ENCODE measurements at regions of chr1 and their contacts with region 1.

Region 1: DNA sequence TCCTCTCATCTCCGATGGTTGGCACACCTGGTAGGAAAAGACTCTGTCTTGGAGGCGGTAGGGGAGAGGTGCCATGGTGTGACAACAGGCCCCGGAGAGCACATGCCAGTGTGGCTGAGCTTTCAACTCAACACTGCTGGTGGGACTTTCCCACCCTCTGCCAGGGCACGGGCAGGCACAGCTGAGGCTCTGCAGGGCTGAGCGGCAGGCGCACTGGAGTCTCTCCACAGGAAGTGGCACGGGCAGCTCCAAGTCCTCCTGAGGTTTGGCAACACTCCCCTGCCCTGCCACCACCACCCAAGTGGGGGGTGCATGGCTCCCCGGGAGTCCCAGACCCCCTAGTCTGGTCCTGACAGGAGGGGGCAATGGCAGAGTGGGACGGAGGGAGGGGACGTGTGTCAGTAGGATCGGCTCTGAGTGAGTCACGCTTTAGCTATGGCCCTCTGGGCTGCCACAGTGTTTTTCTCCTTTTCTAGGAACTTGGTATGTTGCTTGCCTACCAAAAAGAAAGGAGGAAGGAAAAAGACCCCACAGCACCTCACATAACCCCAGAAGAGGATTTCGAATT is 27.3 kb upstream of the EVA1B start:
- DNase-seq: no peak
- H3K4me3 ChIP-seq: no peak overlapping the region
- H3K27me3 ChIP-seq: no peaks in the 10 kb centered on the region
- CTCF ChIP-seq: no peak

Region 2: GRCh38 chr1:36083993-36084738 is 266.6 kb before region 1 on chr1 and contains the start of gene TEKT2:
- CTCF ChIA-PET with region 1: no interaction called
- POLR2A ChIA-PET with region 1: no interaction called
- DNase-seq: no peak
- H3K4me3 ChIP-seq: peak within 1 kb of the TSS; percentile 44
- H3K27me3 ChIP-seq: no peaks in the 10 kb centered on the region
- CTCF ChIP-seq: no peak
- polyA plus RNA-seq, gene TEKT2: 0.10 and 0.16 TPM in 2 replicates

Region 3: GRCh38 chr1:36369061-36369861 is 18.5 kb after region 1 on chr1:
- CTCF ChIA-PET with region 1: interaction called, 88 read pairs
- POLR2A ChIA-PET with region 1: no interaction called
- DNase-seq: no peak
- H3K4me3 ChIP-seq: no peak overlapping the region
- H3K27me3 ChIP-seq: no peaks in the 10 kb centered on the region
- CTCF ChIP-seq: peak; percentile 94

Region 4: DNA sequence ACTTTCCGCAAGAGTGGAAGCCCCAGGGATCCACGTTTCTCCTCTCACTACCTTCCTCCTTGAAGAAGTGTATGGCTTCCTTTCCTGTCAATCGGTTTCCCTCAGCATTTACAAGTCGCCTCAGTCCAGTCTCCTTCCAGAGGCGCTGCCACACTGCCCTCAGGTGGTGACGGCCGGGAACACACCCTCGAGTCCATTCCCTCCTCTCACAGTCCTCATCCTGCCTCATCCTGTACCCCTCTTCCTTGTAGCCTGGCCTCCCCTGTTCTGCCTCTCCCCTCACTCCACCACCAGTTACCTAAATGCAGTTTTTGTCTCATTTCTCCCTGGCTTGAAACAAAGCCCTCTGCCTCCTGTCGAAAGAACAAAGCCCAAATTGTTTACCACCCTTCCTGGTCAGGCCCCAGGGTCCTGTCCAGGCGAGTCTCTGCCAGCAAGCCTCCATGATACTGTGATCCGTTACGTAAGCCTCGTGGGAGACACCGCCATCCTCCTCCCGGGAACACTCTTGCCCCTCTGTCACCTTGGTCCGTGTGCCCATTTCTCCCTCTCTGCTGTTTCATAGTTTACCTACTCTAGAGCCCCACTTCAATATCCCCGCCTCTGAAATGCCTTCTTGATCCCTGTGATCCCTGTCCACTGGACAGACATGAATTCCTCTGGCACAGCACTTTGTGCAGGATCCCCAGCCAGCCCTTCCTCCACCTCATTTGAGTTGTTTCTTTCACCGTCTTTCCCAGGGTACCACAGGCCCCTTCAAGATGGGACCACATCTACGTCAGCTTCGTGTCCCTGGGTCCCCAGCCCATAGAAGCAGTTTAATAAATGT is 70.3 kb after region 1 on chr1:
- CTCF ChIA-PET with region 1: interaction called, 21 read pairs
- POLR2A ChIA-PET with region 1: no interaction called
- DNase-seq: no peak
- H3K4me3 ChIP-seq: no peak overlapping the region
- H3K27me3 ChIP-seq: no peaks in the 10 kb centered on the region
- CTCF ChIP-seq: peak; percentile 94

Region 5: GRCh38 chr1:37865348-37866120 is 1514.8 kb after region 1 on chr1:
- CTCF ChIA-PET with region 1: no interaction called
- POLR2A ChIA-PET with region 1: no interaction called
- DNase-seq: no peak
- H3K4me3 ChIP-seq: no peak overlapping the region
- H3K27me3 ChIP-seq: no peaks in the 10 kb centered on the region
- CTCF ChIP-seq: no peak